Activated CD4-positive, alpha-beta memory T cell treated with anti-CD3 and anti-CD28 coated beads for 36 hours (primary cell): ENCODE measurements at regions of chr4 and their contacts with region 1.

Region 1: DNA sequence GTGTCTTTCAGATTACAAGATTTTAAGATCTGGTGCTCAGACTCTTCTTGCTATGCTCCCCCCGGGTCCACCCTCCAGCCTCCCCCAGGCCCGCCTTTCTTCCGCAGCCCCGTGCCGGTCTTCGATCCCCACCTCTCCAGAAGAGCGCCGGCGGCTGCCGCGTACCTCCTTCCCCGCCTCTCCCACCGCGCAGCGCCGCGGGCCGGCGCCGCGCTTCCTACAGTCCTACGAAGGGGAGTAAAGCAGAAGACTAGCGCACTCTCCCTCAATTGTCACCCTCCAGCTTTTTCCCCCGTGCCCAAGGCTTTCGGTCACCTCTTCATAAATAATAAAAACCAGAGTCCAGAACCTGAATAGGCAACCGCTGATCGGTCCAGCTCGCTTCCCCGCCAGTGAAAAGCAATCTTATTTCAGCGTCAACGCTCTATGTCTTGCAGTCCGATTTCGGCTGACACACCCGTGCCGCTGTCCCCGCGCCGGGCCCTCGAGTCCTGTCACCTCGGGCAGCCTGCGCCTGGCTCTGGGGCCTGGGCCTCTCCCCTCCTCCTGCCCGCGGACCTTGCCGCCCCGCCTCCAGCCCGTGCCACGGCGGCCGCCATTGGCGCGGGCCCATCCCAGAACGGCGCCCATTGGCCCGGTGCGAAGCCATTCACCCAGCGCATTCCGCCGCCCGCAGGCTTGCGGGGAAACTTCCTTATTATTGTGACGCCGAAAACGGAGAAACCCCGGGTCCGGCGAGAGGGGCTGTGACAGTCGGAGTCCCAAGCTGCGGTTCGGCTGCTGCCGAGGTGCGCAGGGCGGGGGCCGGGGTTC is at the start of gene HERC3:
- DNase-seq: peak; percentile 92
- H3K4me3 Mint-ChIP-seq: peak within 1 kb of the TSS; percentile 95
- H3K27ac Mint-ChIP-seq: peak within 1 kb of the TSS; percentile 85
- H3K4me1 Mint-ChIP-seq: peaks cover 41% of the 10 kb centered on the region
- H3K27me3 Mint-ChIP-seq: peaks cover 4% of the 10 kb centered on the region
- total RNA-seq, gene HERC3: 29.0 to 30.2 TPM

Region 2: GRCh38 chr4:88378691-88379559 is 213.1 kb before region 1 on chr4 and contains the start of gene HERC6:
- CTCF ChIA-PET with region 1: no interaction called
- POLR2A ChIA-PET with region 1: no interaction called
- intact Hi-C with region 1: loop called (anchors 5 kb)
- DNase-seq: peak; percentile 86
- H3K4me3 Mint-ChIP-seq: peak within 1 kb of the TSS; percentile 83
- H3K27ac Mint-ChIP-seq: peak within 1 kb of the TSS; percentile 85
- H3K4me1 Mint-ChIP-seq: peaks cover 49% of the 10 kb centered on the region
- H3K27me3 Mint-ChIP-seq: no peaks in the 10 kb centered on the region
- total RNA-seq, gene HERC6: 12.4 to 12.5 TPM

Region 3: GRCh38 chr4:88533937-88534750 is 57.8 kb before region 1 on chr4:
- CTCF ChIA-PET with region 1: interaction called, 7 read pairs
- POLR2A ChIA-PET with region 1: no interaction called
- intact Hi-C with region 1: loop called (anchors 2 kb)
- DNase-seq: no peak
- H3K4me3 Mint-ChIP-seq: no peak overlapping the region
- H3K27ac Mint-ChIP-seq: no peak overlapping the region
- H3K4me1 Mint-ChIP-seq: peaks cover 26% of the 10 kb centered on the region
- H3K27me3 Mint-ChIP-seq: no peaks in the 10 kb centered on the region

Region 4: DNA sequence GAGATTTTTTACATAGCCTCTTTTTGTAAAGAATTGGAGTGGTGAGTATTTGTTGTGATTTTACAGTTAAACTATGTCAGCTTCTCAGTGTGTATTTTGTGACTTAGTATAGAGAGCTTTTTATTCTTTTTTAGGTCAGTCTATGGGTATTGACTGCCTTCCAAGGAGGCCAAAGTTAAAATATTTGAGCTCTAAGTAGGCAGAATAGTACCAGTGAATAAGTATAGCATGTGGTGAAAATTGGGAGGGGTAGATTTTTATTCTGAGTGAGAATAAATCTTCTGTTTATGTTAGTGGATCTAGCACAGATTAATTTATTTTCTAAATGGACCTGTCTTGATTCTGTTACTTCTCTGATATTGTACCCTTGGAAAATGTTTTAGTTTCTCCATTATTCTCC is 37.8 kb after region 1 on chr4:
- CTCF ChIA-PET with region 1: interaction called, 3 read pairs
- POLR2A ChIA-PET with region 1: interaction called, 3 read pairs
- intact Hi-C with region 1: loop called (anchors 5 kb)
- DNase-seq: no peak
- H3K4me3 Mint-ChIP-seq: no peak overlapping the region
- H3K27ac Mint-ChIP-seq: no peak overlapping the region
- H3K4me1 Mint-ChIP-seq: peaks cover 26% of the 10 kb centered on the region
- H3K27me3 Mint-ChIP-seq: no peaks in the 10 kb centered on the region

Region 5: GRCh38 chr4:88697588-88698329 is 105.8 kb after region 1 on chr4 and contains the start of gene NAP1L5:
- CTCF ChIA-PET with region 1: no interaction called
- POLR2A ChIA-PET with region 1: no interaction called
- intact Hi-C with region 1: loop called (anchors 5 kb)
- DNase-seq: peak; percentile 80
- H3K4me3 Mint-ChIP-seq: peak within 1 kb of the TSS; percentile 81
- H3K27ac Mint-ChIP-seq: peak within 1 kb of the TSS; percentile 74
- H3K4me1 Mint-ChIP-seq: peaks cover 12% of the 10 kb centered on the region
- H3K27me3 Mint-ChIP-seq: no peaks in the 10 kb centered on the region
- total RNA-seq, gene NAP1L5: 3.7 to 4.8 TPM

Region 6: DNA sequence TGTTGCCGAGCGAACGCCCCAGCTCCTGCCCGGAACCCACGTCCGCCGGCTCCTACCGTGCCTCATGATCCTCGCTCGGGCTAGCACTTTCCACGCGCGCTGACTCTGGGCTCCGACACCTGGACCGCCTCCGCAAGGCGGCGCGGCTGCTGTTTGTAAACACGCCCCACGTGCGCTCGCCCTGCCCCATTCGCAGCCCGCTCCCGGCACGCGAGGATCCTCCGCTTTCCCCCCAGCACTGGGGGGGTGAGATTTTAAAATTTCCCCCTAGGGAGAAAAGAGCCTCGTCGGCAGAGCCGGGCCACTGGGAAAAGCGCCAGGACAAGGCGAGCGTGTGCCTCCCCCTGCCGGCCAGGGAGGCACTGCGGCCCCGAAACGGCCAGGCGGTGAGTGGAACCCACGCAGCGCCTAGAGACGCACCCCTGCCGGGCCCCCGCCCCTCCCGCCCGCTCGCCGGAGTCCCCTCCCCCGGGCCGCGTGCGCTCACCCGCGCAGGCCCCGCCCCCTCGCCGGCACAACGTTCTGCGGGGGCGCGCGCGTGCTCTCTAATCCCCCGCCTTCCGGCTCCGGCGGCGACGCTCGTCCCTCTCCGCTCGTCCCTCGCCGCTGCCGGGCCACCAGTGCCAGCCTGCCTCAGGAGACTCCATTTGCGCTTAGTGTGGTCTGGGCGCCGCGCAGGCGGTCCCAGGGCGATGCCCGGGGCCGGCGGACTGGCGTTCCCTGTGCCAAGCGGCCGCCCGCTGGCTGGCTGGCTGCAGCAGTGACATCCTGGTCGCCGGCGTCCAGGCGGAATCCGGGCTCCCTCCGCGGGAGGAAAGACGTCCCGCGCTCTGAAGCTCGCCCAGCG is 519.2 kb after region 1 on chr4 and contains the start of gene TIGD2:
- CTCF ChIA-PET with region 1: no interaction called
- POLR2A ChIA-PET with region 1: no interaction called
- intact Hi-C with region 1: loop called (anchors 5 kb)
- DNase-seq: peak; percentile 90
- H3K4me3 Mint-ChIP-seq: peak within 1 kb of the TSS; percentile 74
- H3K27ac Mint-ChIP-seq: no peak within 1 kb of the TSS
- H3K4me1 Mint-ChIP-seq: peaks cover 15% of the 10 kb centered on the region
- H3K27me3 Mint-ChIP-seq: peaks cover 11% of the 10 kb centered on the region
- total RNA-seq, gene TIGD2: 1.1 to 1.4 TPM